ENCODE measurements at regions of chr2 and their contacts with region 1.

Region 1: GRCh38 chr2:128232965-128233789 is 85.5 kb downstream of the HS6ST1 start:
- DNase-seq: peak; percentile 74
- ATAC-seq: peak; percentile 85
- H3K4me3 ChIP-seq: peak overlapping the region; percentile 85
- H3K27ac ChIP-seq: no peak overlapping the region
- H3K4me1 ChIP-seq: peaks cover 22% of the 10 kb centered on the region
- H3K27me3 ChIP-seq: no peaks in the 10 kb centered on the region
- CTCF ChIP-seq: peak; percentile 85

Region 2: GRCh38 chr2:128178650-128179460 is 54.3 kb before region 1 on chr2:
- CTCF ChIA-PET with region 1: interaction called, 5 read pairs
- POLR2A ChIA-PET with region 1: no interaction called
- intact Hi-C with region 1: loop called (anchors 1 kb)
- DNase-seq: peak; percentile 46
- ATAC-seq: peak; percentile 73
- H3K4me3 ChIP-seq: no peak overlapping the region
- H3K27ac ChIP-seq: no peak overlapping the region
- H3K4me1 ChIP-seq: no peaks in the 10 kb centered on the region
- H3K27me3 ChIP-seq: no peaks in the 10 kb centered on the region
- CTCF ChIP-seq: peak; percentile 86

Region 3: GRCh38 chr2:128374001-128374710 is 141.0 kb after region 1 on chr2:
- CTCF ChIA-PET with region 1: no interaction called
- POLR2A ChIA-PET with region 1: no interaction called
- intact Hi-C with region 1: no loop called
- DNase-seq: no peak
- ATAC-seq: no peak
- H3K4me3 ChIP-seq: no peak overlapping the region
- H3K27ac ChIP-seq: no peak overlapping the region
- H3K4me1 ChIP-seq: no peaks in the 10 kb centered on the region
- H3K27me3 ChIP-seq: peaks cover 28% of the 10 kb centered on the region
- CTCF ChIP-seq: no peak

Measured in PC-3 (cell line).